GM10248 (cell line): ENCODE measurements at regions of chr4 and their contacts with region 1.

Region 1: GRCh38 chr4:151117371-151117962 is 18.0 kb downstream of the RPS3A start:
- DNase-seq: peak; percentile 76
- CTCF ChIP-seq: peak; percentile 70

Region 2: GRCh38 chr4:150583287-150584110 is 534.0 kb before region 1 on chr4:
- CTCF ChIA-PET with region 1: no interaction called
- POLR2A ChIA-PET with region 1: no interaction called
- DNase-seq: no peak
- CTCF ChIP-seq: no peak

Region 3: DNA sequence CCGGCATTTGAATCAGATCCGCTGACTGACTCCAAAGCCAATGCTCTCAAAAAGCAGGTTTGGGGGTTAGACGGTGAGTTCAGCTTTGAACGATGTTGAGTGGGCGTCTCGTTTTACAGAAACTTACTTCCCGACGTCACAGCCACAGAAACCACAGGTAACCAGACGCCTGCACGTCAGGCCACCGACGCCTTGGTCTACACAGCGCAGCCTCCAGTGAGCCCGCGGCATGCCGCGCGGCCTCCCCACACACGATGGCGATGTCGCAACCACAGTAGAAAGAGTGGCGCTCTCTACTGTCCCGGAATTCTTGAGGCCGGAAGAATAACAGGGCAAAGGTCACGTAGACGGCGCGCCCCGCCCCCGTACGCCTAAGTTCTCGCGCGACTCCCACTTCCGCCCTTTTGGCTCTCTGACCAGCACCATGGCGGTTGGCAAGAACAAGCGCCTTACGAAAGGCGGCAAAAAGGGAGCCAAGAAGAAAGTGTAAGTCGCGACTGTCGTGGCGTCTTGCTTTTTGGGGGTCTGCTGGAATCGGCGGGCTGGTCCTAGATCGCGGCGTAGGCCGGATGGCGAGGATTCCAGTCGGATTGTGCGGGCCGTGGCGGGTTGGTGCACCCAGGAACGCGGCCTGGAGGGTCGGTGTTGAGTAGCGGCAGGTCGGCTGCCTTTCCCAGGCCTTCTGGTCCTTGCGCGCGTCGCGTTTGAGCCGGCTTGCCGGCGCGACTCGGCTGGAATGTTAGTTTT is 18.1 kb before region 1 on chr4 and contains the start of gene RPS3A:
- CTCF ChIA-PET with region 1: interaction called, 22 read pairs
- POLR2A ChIA-PET with region 1: interaction called, 4 read pairs
- DNase-seq: peak; percentile 93
- CTCF ChIP-seq: peak; percentile 97

Region 4: DNA sequence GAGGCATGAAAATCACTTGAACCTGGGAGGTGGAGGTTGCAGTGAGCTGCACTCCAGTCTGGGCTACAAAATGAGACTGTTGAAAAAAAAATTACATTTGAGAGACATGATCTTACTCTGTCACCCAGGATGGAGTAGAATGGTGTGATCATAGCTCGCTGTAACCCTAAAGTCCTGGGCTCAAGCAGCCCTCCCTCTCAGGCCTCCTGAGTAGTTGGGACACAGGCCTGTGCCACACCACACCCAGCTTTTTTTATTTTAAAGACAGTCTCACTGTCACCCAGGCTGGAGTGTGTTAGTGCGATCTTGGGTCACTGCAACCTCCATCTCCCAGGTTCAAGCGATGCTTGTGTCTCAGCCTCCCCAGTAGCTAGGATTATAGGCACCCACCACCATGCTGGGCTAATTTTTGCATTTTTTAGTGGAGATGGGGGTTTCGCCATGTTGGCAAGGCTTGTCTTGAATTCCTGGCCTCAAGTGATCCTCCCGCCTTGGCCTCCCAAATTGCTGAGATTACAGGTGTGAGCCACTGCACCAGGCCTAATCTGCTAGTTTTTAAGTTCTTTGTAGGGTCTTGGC is 11.9 kb before region 1 on chr4:
- CTCF ChIA-PET with region 1: interaction called, 22 read pairs
- POLR2A ChIA-PET with region 1: interaction called, 5 read pairs
- DNase-seq: no peak
- CTCF ChIP-seq: no peak

Region 5: GRCh38 chr4:151129801-151130200 is 12.3 kb after region 1 on chr4:
- CTCF ChIA-PET with region 1: interaction called, 17 read pairs
- POLR2A ChIA-PET with region 1: interaction called, 3 read pairs
- DNase-seq: no peak
- CTCF ChIP-seq: no peak